CD4-positive, alpha-beta T cell (primary cell): ENCODE measurements at regions of chr14 and their contacts with region 1.

Region 1: DNA sequence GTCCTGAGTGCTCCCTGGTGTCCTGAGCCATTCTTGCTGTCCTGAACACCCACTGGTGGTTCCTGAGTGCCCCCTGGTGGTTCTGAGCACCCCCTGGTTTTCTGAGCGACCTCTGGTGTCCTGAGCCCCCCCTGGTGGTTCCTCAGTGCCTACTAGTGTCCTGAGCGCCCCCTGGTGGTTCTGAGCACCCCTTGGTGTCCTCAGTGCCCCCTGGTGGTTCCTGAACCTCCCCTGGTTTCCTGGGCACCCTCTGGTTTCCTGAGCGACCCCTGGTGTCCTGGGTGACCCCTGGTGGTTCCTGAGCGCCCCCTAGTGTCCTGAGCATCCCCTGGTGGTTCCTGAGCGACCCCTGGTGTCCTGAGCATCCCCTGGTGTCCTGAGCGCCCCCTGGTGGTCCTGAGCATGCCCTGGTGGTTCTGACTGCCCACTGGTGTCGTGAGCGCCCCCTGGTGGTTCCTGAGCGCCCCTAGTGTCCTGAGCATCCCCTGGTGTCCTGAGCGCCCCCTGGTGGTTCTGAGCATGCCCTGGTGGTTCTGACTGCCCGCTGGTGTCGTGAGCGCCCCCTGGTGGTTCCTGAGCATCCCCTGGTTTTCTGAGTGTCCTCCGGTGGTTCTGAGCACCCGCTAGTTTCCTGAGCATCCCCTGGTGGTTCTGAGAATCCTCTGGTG is 473.1 kb downstream of the TMEM121 start:
- DNase-seq: peak in 13 of 14 experiments; percentile 48 to 89 (median 76)
- ATAC-seq: peak; percentile 74
- H3K4me3 ChIP-seq: no peak overlapping the region
- H3K4me3 Mint-ChIP-seq: no peak overlapping the region
- H3K27ac ChIP-seq: no peak overlapping the region
- H3K27ac Mint-ChIP-seq: peak overlapping the region; percentile 33
- H3K4me1 ChIP-seq: peaks cover 24% of the 10 kb centered on the region
- H3K4me1 Mint-ChIP-seq: peaks cover 53% of the 10 kb centered on the region
- H3K27me3 ChIP-seq: no peaks in the 10 kb centered on the region
- H3K27me3 Mint-ChIP-seq: no peaks in the 10 kb centered on the region
- CTCF ChIP-seq: peak; percentile 52

Region 2: DNA sequence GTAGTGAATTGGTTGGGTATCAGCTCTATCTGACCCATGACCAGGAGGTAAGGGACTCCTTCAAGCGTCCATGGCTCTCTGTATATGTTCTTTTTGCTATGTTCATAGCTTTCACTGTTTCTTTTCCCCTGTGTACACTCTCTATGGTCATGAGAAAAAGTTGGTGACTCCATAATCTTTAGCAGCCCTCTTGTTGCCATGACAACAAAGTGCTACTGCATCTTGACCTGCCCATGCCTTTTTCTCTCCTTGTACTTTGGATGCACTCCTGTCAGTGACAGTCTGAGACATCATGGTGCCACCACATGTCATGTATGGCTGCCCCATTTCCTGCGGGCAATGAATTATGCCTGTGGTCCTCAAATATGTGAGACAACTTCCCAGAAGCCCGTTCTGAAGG is 192.9 kb before region 1 on chr14:
- CTCF ChIA-PET with region 1: no interaction called
- POLR2A ChIA-PET with region 1: no interaction called
- intact Hi-C with region 1: no loop called
- DNase-seq: no peak
- ATAC-seq: no peak
- H3K4me3 ChIP-seq: no peak overlapping the region
- H3K4me3 Mint-ChIP-seq: no peak overlapping the region
- H3K27ac ChIP-seq: no peak overlapping the region
- H3K27ac Mint-ChIP-seq: no peak overlapping the region
- H3K4me1 ChIP-seq: no peaks in the 10 kb centered on the region
- H3K4me1 Mint-ChIP-seq: no peaks in the 10 kb centered on the region
- H3K27me3 ChIP-seq: peaks cover 0 to 2% of the 10 kb centered on the region in 2 experiments
- H3K27me3 Mint-ChIP-seq: peaks cover 18% of the 10 kb centered on the region
- CTCF ChIP-seq: no peak

Region 3: GRCh38 chr14:105980224-105980623 is 19.3 kb before region 1 on chr14:
- CTCF ChIA-PET with region 1: interaction called, 6 read pairs
- POLR2A ChIA-PET with region 1: interaction called, 4 read pairs
- intact Hi-C with region 1: loop called in 1 of 2 experiments (anchors 2 kb)
- DNase-seq: no peak
- ATAC-seq: no peak
- H3K4me3 ChIP-seq: no peak overlapping the region
- H3K4me3 Mint-ChIP-seq: no peak overlapping the region
- H3K27ac ChIP-seq: no peak overlapping the region
- H3K27ac Mint-ChIP-seq: no peak overlapping the region
- H3K4me1 ChIP-seq: peaks cover 29% of the 10 kb centered on the region
- H3K4me1 Mint-ChIP-seq: peaks cover 50% of the 10 kb centered on the region
- H3K27me3 ChIP-seq: no peaks in the 10 kb centered on the region
- H3K27me3 Mint-ChIP-seq: no peaks in the 10 kb centered on the region
- CTCF ChIP-seq: no peak

Region 4: GRCh38 chr14:105986894-105987284 is 12.6 kb before region 1 on chr14:
- CTCF ChIA-PET with region 1: interaction called, 5 read pairs
- POLR2A ChIA-PET with region 1: interaction called, 10 read pairs
- intact Hi-C with region 1: no loop called
- DNase-seq: no peak
- ATAC-seq: peak; percentile 16
- H3K4me3 ChIP-seq: no peak overlapping the region
- H3K4me3 Mint-ChIP-seq: peak overlapping the region; percentile 77
- H3K27ac ChIP-seq: peak overlapping the region; percentile 16 to 29
- H3K27ac Mint-ChIP-seq: peak overlapping the region; percentile 97
- H3K4me1 ChIP-seq: peaks cover 54% of the 10 kb centered on the region
- H3K4me1 Mint-ChIP-seq: peaks cover 65% of the 10 kb centered on the region
- H3K27me3 ChIP-seq: no peaks in the 10 kb centered on the region
- H3K27me3 Mint-ChIP-seq: no peaks in the 10 kb centered on the region
- CTCF ChIP-seq: no peak

Region 5: GRCh38 chr14:106024983-106025604 is 25.6 kb after region 1 on chr14:
- CTCF ChIA-PET with region 1: no interaction called
- POLR2A ChIA-PET with region 1: interaction called, 10 read pairs
- intact Hi-C with region 1: no loop called
- DNase-seq: peak in 11 of 14 experiments; percentile 13 to 56 (median 40)
- ATAC-seq: peak; percentile 96
- H3K4me3 ChIP-seq: no peak overlapping the region
- H3K4me3 Mint-ChIP-seq: peak overlapping the region; percentile 6
- H3K27ac ChIP-seq: no peak overlapping the region
- H3K27ac Mint-ChIP-seq: peak overlapping the region; percentile 37
- H3K4me1 ChIP-seq: peaks cover 10% of the 10 kb centered on the region
- H3K4me1 Mint-ChIP-seq: peaks cover 28% of the 10 kb centered on the region
- H3K27me3 ChIP-seq: no peaks in the 10 kb centered on the region
- H3K27me3 Mint-ChIP-seq: no peaks in the 10 kb centered on the region
- CTCF ChIP-seq: no peak

Region 6: GRCh38 chr14:106062502-106063272 is 63.2 kb after region 1 on chr14:
- CTCF ChIA-PET with region 1: no interaction called
- POLR2A ChIA-PET with region 1: no interaction called
- intact Hi-C with region 1: no loop called
- DNase-seq: peak in 1 of 14 experiments; percentile 13
- ATAC-seq: no peak
- H3K4me3 ChIP-seq: no peak overlapping the region
- H3K4me3 Mint-ChIP-seq: no peak overlapping the region
- H3K27ac ChIP-seq: no peak overlapping the region
- H3K27ac Mint-ChIP-seq: no peak overlapping the region
- H3K4me1 ChIP-seq: peaks cover 17% of the 10 kb centered on the region
- H3K4me1 Mint-ChIP-seq: peaks cover 17% of the 10 kb centered on the region
- H3K27me3 ChIP-seq: peaks cover 3 to 4% of the 10 kb centered on the region in 2 experiments
- H3K27me3 Mint-ChIP-seq: peaks cover 12% of the 10 kb centered on the region
- CTCF ChIP-seq: no peak